CD8-positive, alpha-beta memory T cell (primary cell): ENCODE measurements at regions of chr12 and their contacts with region 1.

Region 1: DNA sequence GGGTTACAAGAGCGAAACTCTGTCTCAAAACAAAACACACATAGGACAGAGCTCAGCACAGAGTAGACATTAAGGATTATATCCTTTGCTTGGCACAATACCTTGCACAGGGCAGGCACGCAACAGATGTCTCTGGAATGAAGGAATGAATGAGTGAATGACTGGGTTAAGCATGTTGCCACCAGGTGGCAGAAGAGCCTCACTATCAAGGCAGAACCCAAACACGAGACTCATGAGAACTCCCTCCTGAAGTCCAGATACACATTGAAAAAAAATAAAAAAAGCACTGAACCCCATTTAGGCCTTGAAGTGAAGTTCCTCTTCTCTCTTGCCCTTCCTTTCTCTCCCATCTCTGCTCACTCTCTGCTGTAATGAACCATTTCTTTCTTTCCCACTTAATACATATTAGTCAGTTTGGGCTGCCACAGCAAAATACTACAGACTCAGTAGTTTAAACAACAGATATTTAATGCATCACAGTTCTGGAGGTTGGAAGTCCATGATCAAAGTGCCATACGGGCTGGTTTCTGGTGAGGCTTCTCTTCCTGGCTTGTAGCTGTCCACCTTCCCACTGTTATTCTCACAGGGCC is 26.6 kb upstream of the LTA4H start:
- DNase-seq: peak; percentile 54 to 77 (median 67)
- H3K4me3 ChIP-seq: no peak overlapping the region
- H3K4me3 Mint-ChIP-seq: no peak overlapping the region
- H3K27ac ChIP-seq: no peak overlapping the region
- H3K27ac Mint-ChIP-seq: peak overlapping the region in 4 of 8 donors; percentile 0 to 86 (median 0)
- H3K4me1 ChIP-seq: peaks cover 14% of the 10 kb centered on the region
- H3K4me1 Mint-ChIP-seq: peaks cover 15 to 29% (median 16%) of the 10 kb centered on the region in 3 donors
- H3K27me3 ChIP-seq: no peaks in the 10 kb centered on the region
- H3K27me3 Mint-ChIP-seq: peaks cover 2 to 3% of the 10 kb centered on the region in 2 donors

Region 2: GRCh38 chr12:96121271-96121711 is 59.3 kb after region 1 on chr12:
- CTCF ChIA-PET with region 1: no interaction called
- POLR2A ChIA-PET with region 1: no interaction called
- DNase-seq: no peak
- H3K4me3 ChIP-seq: no peak overlapping the region
- H3K4me3 Mint-ChIP-seq: no peak overlapping the region
- H3K27ac ChIP-seq: no peak overlapping the region
- H3K27ac Mint-ChIP-seq: peak overlapping the region in 1 of 8 donors; percentile 44
- H3K4me1 ChIP-seq: peaks cover 4% of the 10 kb centered on the region
- H3K4me1 Mint-ChIP-seq: peaks cover 0 to 7% (median 3%) of the 10 kb centered on the region in 3 donors
- H3K27me3 ChIP-seq: no peaks in the 10 kb centered on the region
- H3K27me3 Mint-ChIP-seq: no peaks in the 10 kb centered on the region

Region 3: DNA sequence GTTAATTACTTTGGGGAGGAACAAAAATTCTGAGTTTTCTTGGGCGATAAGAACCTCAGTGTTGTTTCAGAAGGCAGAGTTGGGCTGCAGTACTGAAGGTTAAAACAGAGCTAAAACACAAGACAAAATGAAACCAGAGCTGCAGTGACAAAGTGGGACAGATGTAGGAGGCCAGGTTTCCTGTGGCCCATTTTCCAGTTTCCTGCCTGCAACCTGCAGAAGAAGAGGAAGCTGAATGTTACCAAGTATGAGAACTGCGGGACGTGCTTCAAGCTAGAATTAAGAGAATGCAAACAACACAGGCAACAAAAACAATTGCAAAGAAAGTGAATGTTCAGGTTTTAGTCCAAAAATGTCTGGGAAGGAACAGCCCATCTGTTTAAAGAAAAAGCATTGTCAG is 150.0 kb after region 1 on chr12:
- CTCF ChIA-PET with region 1: interaction called, 88 read pairs
- POLR2A ChIA-PET with region 1: no interaction called
- DNase-seq: peak in 1 of 5 donors; percentile 27
- H3K4me3 ChIP-seq: no peak overlapping the region
- H3K4me3 Mint-ChIP-seq: peak overlapping the region; percentile 50 to 85 (median 70)
- H3K27ac ChIP-seq: no peak overlapping the region
- H3K27ac Mint-ChIP-seq: peak overlapping the region; percentile 70 to 96 (median 89)
- H3K4me1 ChIP-seq: peaks cover 77% of the 10 kb centered on the region
- H3K4me1 Mint-ChIP-seq: peaks cover 74 to 89% (median 76%) of the 10 kb centered on the region in 3 donors
- H3K27me3 ChIP-seq: no peaks in the 10 kb centered on the region
- H3K27me3 Mint-ChIP-seq: no peaks in the 10 kb centered on the region